MCF 10A (cell line): ENCODE measurements at regions of chr19 and their contacts with region 1.

Region 1: GRCh38 chr19:2543463-2544442 is 67.8 kb downstream of the GADD45B start:
- DNase-seq: peak; percentile 97
- H3K4me3 Mint-ChIP-seq: peak overlapping the region; percentile 61
- H3K27ac Mint-ChIP-seq: peak overlapping the region; percentile 85
- H3K4me1 Mint-ChIP-seq: peaks cover 21% of the 10 kb centered on the region
- H3K27me3 Mint-ChIP-seq: no peaks in the 10 kb centered on the region
- CTCF ChIP-seq: peak; percentile 36

Region 2: GRCh38 chr19:2408247-2408646 is 135.5 kb before region 1 on chr19:
- CTCF ChIA-PET with region 1: no interaction called
- POLR2A ChIA-PET with region 1: no interaction called
- intact Hi-C with region 1: no loop called
- DNase-seq: no peak
- H3K4me3 Mint-ChIP-seq: no peak overlapping the region
- H3K27ac Mint-ChIP-seq: no peak overlapping the region
- H3K4me1 Mint-ChIP-seq: peaks cover 2% of the 10 kb centered on the region
- H3K27me3 Mint-ChIP-seq: no peaks in the 10 kb centered on the region
- CTCF ChIP-seq: no peak

Region 3: GRCh38 chr19:2494444-2495129 is 49.2 kb before region 1 on chr19:
- CTCF ChIA-PET with region 1: interaction called, 4 read pairs
- POLR2A ChIA-PET with region 1: interaction called, 11 read pairs
- intact Hi-C with region 1: loop called (anchors 1 kb)
- DNase-seq: peak; percentile 45
- H3K4me3 Mint-ChIP-seq: peak overlapping the region; percentile 66
- H3K27ac Mint-ChIP-seq: no peak overlapping the region
- H3K4me1 Mint-ChIP-seq: peaks cover 33% of the 10 kb centered on the region
- H3K27me3 Mint-ChIP-seq: no peaks in the 10 kb centered on the region
- CTCF ChIP-seq: no peak

Region 4: DNA sequence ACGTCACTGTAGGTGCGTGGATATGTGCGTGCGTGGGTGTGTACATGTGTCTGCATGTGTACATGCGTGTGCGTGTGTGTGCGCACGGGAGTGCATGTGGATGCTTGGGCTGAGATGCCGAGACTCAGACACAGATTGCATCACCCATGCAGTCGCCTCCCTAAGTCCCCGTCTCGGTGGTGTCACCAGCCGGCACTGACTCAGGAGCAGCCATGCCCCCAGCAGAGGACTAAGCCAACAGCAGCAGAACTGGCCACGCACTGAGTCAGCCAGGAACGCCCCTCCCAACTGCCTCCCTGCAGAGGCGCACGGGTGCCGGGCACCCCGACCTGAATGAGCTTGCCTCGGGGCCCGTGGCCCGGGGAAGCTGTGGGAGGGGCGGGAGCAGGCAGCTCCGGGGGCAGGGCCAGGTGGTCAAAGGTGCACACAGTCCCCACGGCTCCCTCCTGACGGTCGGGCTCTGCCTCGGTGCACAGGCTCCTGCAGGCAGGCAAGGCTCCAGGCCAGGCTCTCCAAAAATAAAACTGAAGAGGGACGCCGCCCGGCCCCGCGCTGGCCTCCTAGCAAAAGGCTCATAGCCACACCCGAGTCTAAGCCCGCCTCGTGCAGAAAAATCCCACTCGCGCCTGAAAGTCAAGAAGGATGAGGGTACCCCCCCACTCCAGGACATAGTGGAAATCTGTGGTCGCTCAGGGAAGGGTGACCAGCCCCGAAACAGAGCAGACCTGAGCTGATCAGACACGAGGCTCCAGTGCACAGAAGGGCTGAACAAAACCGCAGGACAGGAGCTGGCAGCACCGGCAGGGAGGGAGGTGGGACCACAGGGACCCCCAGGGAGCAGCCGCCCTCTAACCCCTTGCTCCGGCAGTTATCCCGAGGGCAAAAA is 18.7 kb before region 1 on chr19:
- CTCF ChIA-PET with region 1: interaction called, 5 read pairs
- POLR2A ChIA-PET with region 1: interaction called, 20 read pairs
- intact Hi-C with region 1: no loop called
- DNase-seq: peak; percentile 82
- H3K4me3 Mint-ChIP-seq: peak overlapping the region; percentile 25
- H3K27ac Mint-ChIP-seq: no peak overlapping the region
- H3K4me1 Mint-ChIP-seq: peaks cover 17% of the 10 kb centered on the region
- H3K27me3 Mint-ChIP-seq: no peaks in the 10 kb centered on the region
- CTCF ChIP-seq: no peak

Region 5: DNA sequence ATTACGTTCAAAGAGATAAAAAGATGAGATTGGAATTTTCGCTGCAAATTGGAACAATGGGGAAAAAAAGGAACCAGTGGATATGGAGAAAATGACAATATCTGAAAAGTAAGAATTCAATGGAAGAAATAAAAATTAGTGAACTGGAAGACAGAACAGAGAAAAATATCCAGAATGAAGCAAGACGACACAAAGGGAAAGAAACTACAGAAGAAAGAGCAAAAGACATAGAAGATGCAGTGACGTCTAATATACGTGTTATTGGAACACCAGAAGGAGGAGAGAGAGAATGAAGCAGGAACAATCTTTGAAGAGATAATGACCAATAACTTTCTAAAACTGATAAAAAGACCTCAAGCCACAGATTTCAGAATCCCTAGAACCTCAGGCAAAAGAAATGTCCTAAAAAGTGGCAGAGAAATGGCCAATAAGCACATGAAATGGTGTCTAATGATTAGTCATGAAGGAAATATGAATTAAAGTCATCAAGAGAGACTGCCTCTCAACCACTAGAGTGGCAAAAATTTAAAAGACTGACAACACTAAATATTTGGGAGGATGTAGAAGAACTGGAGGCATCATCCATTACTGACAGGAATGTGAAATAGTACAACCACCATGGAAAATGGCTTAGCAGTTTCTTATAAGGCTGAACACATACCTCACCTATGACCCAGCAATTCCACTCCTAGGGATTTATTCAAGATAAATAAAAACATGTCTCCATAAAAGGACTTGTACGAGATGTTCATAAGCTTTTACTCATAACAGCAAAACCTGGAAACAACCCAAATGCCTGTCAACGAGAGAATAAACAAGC is 11.3 kb before region 1 on chr19:
- CTCF ChIA-PET with region 1: interaction called, 5 read pairs
- POLR2A ChIA-PET with region 1: interaction called, 27 read pairs
- intact Hi-C with region 1: no loop called
- DNase-seq: peak; percentile 95
- H3K4me3 Mint-ChIP-seq: peak overlapping the region; percentile 0
- H3K27ac Mint-ChIP-seq: peak overlapping the region; percentile 87
- H3K4me1 Mint-ChIP-seq: peaks cover 36% of the 10 kb centered on the region
- H3K27me3 Mint-ChIP-seq: no peaks in the 10 kb centered on the region
- CTCF ChIP-seq: no peak

Region 6: GRCh38 chr19:2578901-2579677 is 35.3 kb after region 1 on chr19:
- CTCF ChIA-PET with region 1: interaction called, 27 read pairs
- POLR2A ChIA-PET with region 1: interaction called, 12 read pairs
- intact Hi-C with region 1: loop called (anchors 1 kb)
- DNase-seq: peak; percentile 96
- H3K4me3 Mint-ChIP-seq: peak overlapping the region; percentile 67
- H3K27ac Mint-ChIP-seq: peak overlapping the region; percentile 40
- H3K4me1 Mint-ChIP-seq: peaks cover 5% of the 10 kb centered on the region
- H3K27me3 Mint-ChIP-seq: no peaks in the 10 kb centered on the region
- CTCF ChIP-seq: peak; percentile 86

Region 7: GRCh38 chr19:2691951-2692350 is 148.2 kb after region 1 on chr19:
- CTCF ChIA-PET with region 1: no interaction called
- POLR2A ChIA-PET with region 1: no interaction called
- intact Hi-C with region 1: no loop called
- DNase-seq: no peak
- H3K4me3 Mint-ChIP-seq: no peak overlapping the region
- H3K27ac Mint-ChIP-seq: no peak overlapping the region
- H3K4me1 Mint-ChIP-seq: no peaks in the 10 kb centered on the region
- H3K27me3 Mint-ChIP-seq: peaks cover 36% of the 10 kb centered on the region
- CTCF ChIP-seq: no peak